ENCODE measurements at regions of chr11 and their contacts with region 1.

Region 1: DNA sequence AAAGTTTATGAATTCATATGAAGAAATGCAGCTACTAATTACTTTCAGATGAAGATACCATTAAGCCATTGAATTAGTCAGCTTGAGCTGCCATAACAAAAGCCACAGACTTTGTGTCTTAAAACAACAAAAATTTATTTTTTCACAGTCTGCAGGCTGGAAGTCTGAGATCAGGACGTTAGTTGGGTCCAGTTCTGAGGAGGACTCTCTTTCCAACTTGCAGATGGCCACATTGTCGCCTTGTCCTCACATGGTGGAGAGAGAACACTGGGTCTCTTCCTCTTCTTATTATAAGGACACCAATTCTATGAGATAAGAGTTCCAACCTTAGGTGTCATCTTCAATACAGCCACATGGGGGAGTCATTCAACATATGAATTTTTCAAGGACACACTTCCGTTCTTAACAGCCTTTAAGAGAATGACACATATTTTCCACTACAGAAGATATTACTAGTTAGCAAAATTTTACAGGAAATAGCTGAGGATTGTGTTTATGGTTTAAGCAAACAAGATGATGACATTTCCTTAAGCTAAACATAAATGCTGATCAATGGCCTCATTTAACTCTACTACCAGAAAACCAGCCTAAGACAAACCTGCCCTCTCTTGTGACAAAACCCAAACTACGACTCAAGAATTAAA is 56.0 kb downstream of the DCUN1D5 start:
- DNase-seq: peak; percentile 61
- H3K4me3 ChIP-seq: no peak overlapping the region
- H3K27ac ChIP-seq: no peak overlapping the region
- H3K4me1 ChIP-seq: peaks cover 3% of the 10 kb centered on the region
- H3K27me3 ChIP-seq: no peaks in the 10 kb centered on the region
- CTCF ChIP-seq: peak; percentile 62 to 67

Region 2: GRCh38 chr11:103055221-103055890 is 19.4 kb after region 1 on chr11:
- CTCF ChIA-PET with region 1: no interaction called
- dilution Hi-C with region 1: no loop called
- in situ Hi-C with region 1: no loop called
- intact Hi-C with region 1: loop called (anchors 1 kb)
- DNase-seq: peak; percentile 33
- H3K4me3 ChIP-seq: no peak overlapping the region
- H3K27ac ChIP-seq: no peak overlapping the region
- H3K4me1 ChIP-seq: no peaks in the 10 kb centered on the region
- H3K27me3 ChIP-seq: no peaks in the 10 kb centered on the region
- CTCF ChIP-seq: peak; percentile 61 to 67

Region 3: GRCh38 chr11:103464420-103464819 is 428.5 kb after region 1 on chr11:
- CTCF ChIA-PET with region 1: interaction called, 20 read pairs
- dilution Hi-C with region 1: no loop called
- in situ Hi-C with region 1: no loop called
- intact Hi-C with region 1: no loop called
- DNase-seq: no peak
- H3K4me3 ChIP-seq: no peak overlapping the region
- H3K27ac ChIP-seq: no peak overlapping the region
- H3K4me1 ChIP-seq: no peaks in the 10 kb centered on the region
- H3K27me3 ChIP-seq: no peaks in the 10 kb centered on the region
- CTCF ChIP-seq: no peak

Measured in mammary epithelial cell (primary cell).